PC-3 (cell line): ENCODE measurements at regions of chr1 and their contacts with region 1.

Region 1: GRCh38 chr1:42335050-42335808 is at the start of gene FOXJ3:
- DNase-seq: peak; percentile 95
- ATAC-seq: peak; percentile 67
- H3K4me3 ChIP-seq: peak within 1 kb of the TSS; percentile 74
- H3K27ac ChIP-seq: peak within 1 kb of the TSS; percentile 78
- H3K4me1 ChIP-seq: peaks cover 25% of the 10 kb centered on the region
- H3K27me3 ChIP-seq: no peaks in the 10 kb centered on the region
- CTCF ChIP-seq: no peak
- total RNA-seq, gene FOXJ3: 22.7 and 23.4 TPM in 2 replicates

Region 2: GRCh38 chr1:42146626-42147320 is 188.5 kb before region 1 on chr1:
- CTCF ChIA-PET with region 1: no interaction called
- POLR2A ChIA-PET with region 1: no interaction called
- intact Hi-C with region 1: loop called (anchors 5 kb)
- DNase-seq: peak; percentile 90
- ATAC-seq: peak; percentile 84
- H3K4me3 ChIP-seq: no peak overlapping the region
- H3K27ac ChIP-seq: no peak overlapping the region
- H3K4me1 ChIP-seq: peaks cover 8% of the 10 kb centered on the region; the same call in 1 of the 2 replicates
- H3K27me3 ChIP-seq: no peaks in the 10 kb centered on the region
- CTCF ChIP-seq: peak; percentile 92

Region 3: DNA sequence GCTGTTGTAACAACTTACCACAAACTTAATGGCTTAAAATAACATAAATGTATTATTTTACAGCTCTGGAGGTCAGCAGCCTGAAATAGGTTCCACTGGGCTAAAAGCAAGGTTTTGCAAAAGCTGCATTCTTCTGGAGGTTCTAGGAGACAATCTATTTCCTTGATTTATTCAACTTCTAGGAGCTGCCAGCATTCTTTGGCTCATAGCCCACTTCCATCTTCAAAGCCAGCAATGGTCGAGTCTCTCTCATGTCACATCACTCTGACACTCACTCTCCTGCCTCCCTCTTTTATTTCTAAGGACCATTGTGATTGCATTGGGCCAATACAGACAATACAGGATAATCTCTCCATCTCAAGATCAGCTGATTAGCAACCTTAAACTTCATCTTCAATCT is 14.9 kb after region 1 on chr1:
- CTCF ChIA-PET with region 1: no interaction called
- POLR2A ChIA-PET with region 1: no interaction called
- intact Hi-C with region 1: no loop called
- DNase-seq: no peak
- ATAC-seq: no peak
- H3K4me3 ChIP-seq: no peak overlapping the region
- H3K27ac ChIP-seq: no peak overlapping the region
- H3K4me1 ChIP-seq: no peaks in the 10 kb centered on the region
- H3K27me3 ChIP-seq: no peaks in the 10 kb centered on the region
- CTCF ChIP-seq: no peak

Region 4: GRCh38 chr1:42392967-42393848 is 58.0 kb after region 1 on chr1:
- CTCF ChIA-PET with region 1: no interaction called
- POLR2A ChIA-PET with region 1: interaction called, 5 read pairs
- intact Hi-C with region 1: loop called (anchors 5 kb)
- DNase-seq: peak; percentile 84
- ATAC-seq: peak; percentile 78
- H3K4me3 ChIP-seq: peak overlapping the region; percentile 21
- H3K27ac ChIP-seq: peak overlapping the region; percentile 64
- H3K4me1 ChIP-seq: peaks cover 26% of the 10 kb centered on the region
- H3K27me3 ChIP-seq: no peaks in the 10 kb centered on the region
- CTCF ChIP-seq: no peak

Region 5: DNA sequence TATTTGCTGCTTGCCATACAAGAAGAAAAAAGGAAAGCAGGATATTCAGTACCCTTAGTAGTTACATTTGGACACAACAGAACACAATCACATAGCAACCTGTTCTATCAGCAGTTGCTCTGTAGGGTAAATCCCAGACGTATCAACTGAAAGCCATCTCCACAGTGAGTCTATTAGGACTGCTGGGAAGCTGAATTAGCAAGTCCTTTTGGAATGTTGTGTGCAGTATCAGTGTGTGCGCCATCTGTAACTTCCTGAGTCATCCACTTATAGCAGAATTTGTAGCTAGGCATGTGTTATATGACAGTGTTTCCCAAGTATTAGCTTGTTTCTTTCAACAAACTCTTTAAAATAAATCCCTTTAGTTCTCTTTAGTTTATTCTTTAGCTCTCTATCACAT is 149.2 kb after region 1 on chr1:
- CTCF ChIA-PET with region 1: no interaction called
- POLR2A ChIA-PET with region 1: no interaction called
- intact Hi-C with region 1: no loop called
- DNase-seq: peak; percentile 37
- ATAC-seq: no peak
- H3K4me3 ChIP-seq: no peak overlapping the region
- H3K27ac ChIP-seq: no peak overlapping the region
- H3K4me1 ChIP-seq: no peaks in the 10 kb centered on the region
- H3K27me3 ChIP-seq: no peaks in the 10 kb centered on the region
- CTCF ChIP-seq: no peak

Region 6: DNA sequence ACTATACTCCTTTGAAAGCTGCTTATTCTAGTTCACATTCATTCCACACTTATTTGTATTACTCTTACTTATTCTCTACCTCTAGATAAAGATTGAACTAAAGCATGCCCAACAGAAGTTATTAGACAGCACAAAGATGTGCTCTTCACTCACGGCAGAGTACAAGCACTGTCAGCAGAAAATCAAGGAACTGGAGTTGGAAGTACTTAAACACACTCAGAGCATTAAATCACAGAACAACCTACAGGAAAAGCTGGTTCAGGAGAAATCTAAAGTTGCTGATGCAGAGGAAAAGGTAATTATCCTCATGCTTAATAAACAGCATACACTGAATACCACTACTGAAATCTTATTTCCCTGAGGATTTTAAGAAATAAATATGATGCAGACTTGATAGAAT is 241.7 kb after region 1 on chr1:
- CTCF ChIA-PET with region 1: no interaction called
- POLR2A ChIA-PET with region 1: no interaction called
- intact Hi-C with region 1: loop called (anchors 5 kb)
- DNase-seq: no peak
- ATAC-seq: no peak
- H3K4me3 ChIP-seq: no peak overlapping the region
- H3K27ac ChIP-seq: no peak overlapping the region
- H3K4me1 ChIP-seq: no peaks in the 10 kb centered on the region
- H3K27me3 ChIP-seq: no peaks in the 10 kb centered on the region
- CTCF ChIP-seq: no peak

Region 7: GRCh38 chr1:42681741-42682483 is 346.7 kb after region 1 on chr1 and contains the start of gene YBX1:
- CTCF ChIA-PET with region 1: no interaction called
- POLR2A ChIA-PET with region 1: interaction called, 3 read pairs
- intact Hi-C with region 1: loop called (anchors 5 kb)
- DNase-seq: peak; percentile 98
- ATAC-seq: peak; percentile 89
- H3K4me3 ChIP-seq: peak within 1 kb of the TSS; percentile 79
- H3K27ac ChIP-seq: peak within 1 kb of the TSS; percentile 68
- H3K4me1 ChIP-seq: peaks cover 38% of the 10 kb centered on the region
- H3K27me3 ChIP-seq: no peaks in the 10 kb centered on the region
- CTCF ChIP-seq: no peak
- total RNA-seq, gene YBX1: 1,259 and 1,468 TPM in 2 replicates